ENCODE measurements at regions of chr12 and their contacts with region 1.

Region 1: DNA sequence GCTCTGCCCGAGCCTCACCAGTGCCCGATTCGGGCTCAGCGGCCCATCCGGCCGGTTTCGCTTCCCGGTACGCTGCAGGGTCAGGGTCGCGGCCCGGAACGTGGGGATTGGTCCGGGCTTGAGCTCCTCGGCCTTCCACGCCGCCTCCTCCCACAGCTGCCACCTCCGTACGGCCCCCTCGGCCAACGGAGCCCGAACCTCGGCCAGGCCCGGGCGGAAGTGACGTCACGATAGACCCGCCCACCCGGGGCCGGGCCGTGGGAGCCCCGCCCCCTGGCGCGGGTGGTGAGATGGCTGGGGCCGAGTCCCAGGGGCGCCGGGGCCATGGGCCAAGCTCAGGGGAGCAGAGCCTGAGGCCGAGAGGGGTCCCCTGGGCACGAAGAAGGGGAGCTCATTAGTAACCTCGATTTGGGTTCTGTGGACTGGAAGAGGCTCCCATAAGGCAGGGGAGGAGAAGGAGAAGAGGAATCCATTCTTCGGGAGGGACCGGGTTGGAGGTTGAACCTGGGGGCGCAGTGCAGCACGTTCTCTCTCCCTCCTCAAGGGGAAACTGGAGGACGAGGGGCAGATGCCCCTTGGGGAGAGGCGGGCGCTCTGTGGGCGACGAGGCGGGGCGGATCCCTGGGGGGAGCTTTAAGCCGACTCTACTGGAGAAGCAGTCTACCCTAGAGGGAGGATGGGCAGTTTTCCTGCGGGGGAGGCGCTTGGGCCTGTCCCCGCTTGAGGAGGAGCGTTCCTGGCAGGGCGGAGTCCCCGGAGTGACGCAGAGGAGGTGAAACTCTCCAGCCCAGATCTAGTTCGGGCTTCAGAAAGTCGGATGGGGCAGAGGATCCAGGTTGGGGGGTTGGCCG is at the start of gene MLF2:
- DNase-seq: peak; percentile 99
- H3K4me3 ChIP-seq: peak within 1 kb of the TSS; percentile 100
- H3K27ac ChIP-seq: peak within 1 kb of the TSS; percentile 99
- H3K4me1 ChIP-seq: peaks cover 18% of the 10 kb centered on the region
- H3K27me3 ChIP-seq: no peaks in the 10 kb centered on the region
- CTCF ChIP-seq: peak; percentile 98
- total RNA-seq, gene MLF2: 242 and 254 TPM in 2 replicates

Region 2: GRCh38 chr12:6764011-6764828 is 11.1 kb after region 1 on chr12:
- CTCF ChIA-PET with region 1: interaction called, 21 read pairs
- POLR2A ChIA-PET with region 1: interaction called, 6 read pairs
- intact Hi-C with region 1: loop called (anchors 2 kb)
- DNase-seq: peak; percentile 100
- H3K4me3 ChIP-seq: peak overlapping the region; percentile 97
- H3K27ac ChIP-seq: peak overlapping the region; percentile 89
- H3K4me1 ChIP-seq: peaks cover 36% of the 10 kb centered on the region
- H3K27me3 ChIP-seq: no peaks in the 10 kb centered on the region
- CTCF ChIP-seq: no peak

Region 3: DNA sequence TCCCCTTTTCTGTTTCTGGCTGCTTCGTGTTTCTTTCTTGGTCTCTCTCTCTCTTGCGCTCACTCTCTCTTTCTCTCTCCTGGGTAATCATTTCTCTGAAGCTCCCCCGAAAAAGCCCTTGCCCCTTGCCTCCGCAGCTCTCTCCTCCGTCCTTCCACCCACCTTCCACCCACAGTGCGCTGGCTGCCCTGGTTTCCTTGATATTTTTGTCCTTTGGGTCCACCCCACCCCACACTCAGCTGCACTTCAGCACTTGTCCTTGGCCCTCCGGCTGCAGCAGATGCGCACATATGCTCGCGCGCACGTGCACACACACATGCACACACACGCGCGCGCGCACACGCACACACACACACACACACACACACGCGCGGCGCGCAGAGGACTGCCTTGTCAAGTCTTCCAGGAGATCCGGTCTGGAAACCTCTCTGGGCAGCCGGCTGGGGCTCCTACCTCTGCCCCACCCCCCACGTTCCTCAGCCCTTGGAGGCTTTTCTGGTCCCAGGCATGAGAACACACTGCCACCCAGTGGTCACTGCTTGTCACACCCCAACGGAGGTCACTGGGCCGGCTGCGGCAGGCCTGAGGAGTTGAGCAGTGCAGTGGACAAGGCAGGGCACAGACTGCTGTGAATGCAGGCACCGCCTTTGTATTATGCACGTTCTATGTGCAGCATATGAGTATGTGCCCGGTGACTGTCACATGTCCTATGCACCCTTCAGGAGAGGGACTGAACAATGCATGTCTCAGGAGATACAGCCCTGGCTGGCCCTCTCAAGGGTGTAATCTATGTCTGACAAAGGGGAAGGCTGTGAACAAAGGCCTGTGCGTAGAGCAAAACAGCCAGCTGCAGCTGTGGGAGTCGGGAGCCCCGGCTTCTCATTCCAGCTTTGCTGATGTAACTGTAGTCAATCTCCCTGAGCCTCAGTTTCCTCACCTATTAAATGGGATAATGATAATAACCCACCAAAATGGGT is 25.7 kb after region 1 on chr12:
- CTCF ChIA-PET with region 1: interaction called, 12 read pairs
- POLR2A ChIA-PET with region 1: no interaction called
- intact Hi-C with region 1: loop called (anchors 1 kb)
- DNase-seq: peak; percentile 93
- H3K4me3 ChIP-seq: peak overlapping the region; percentile 30
- H3K27ac ChIP-seq: peak overlapping the region; percentile 29
- H3K4me1 ChIP-seq: peaks cover 8% of the 10 kb centered on the region
- H3K27me3 ChIP-seq: no peaks in the 10 kb centered on the region
- CTCF ChIP-seq: peak; percentile 96

Region 4: DNA sequence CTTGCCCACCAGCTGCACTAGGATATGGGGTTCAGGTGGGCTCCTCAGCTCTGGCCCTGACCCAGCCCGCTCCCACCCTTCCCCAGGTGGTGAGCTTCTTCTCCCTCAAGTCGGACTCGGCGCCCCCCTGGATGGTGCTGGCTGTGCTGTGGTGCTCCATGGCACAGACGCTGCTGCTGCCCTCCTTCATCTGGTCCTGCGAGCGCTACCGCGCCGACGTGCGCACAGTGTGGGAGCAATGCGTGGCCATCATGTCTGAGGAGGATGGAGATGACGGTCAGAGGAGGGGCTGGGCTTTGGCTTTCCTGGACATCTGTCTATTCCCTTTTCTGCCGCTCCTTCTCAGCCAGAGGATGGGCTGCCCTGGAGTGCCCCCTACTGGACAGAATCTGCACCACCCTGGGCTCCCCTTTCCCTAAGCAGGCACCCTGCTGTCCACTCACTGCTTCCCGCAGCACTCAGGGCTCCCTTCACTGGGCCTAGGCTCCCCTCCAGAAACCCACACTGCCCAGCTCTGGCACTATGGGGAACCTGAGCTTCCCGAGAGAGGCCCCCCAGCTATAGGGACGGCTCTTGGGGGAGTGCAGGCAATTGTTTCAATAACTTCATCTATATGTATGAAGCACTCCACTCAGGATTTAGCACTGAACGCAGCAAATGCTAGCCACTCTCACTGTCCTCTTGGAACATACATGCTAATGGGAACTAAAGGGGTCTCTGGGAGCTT is 72.4 kb after region 1 on chr12:
- CTCF ChIA-PET with region 1: interaction called, 6 read pairs
- POLR2A ChIA-PET with region 1: interaction called, 3 read pairs
- intact Hi-C with region 1: loop called (anchors 1 kb)
- DNase-seq: peak; percentile 85
- H3K4me3 ChIP-seq: no peak overlapping the region
- H3K27ac ChIP-seq: peak overlapping the region; percentile 11
- H3K4me1 ChIP-seq: peaks cover 37% of the 10 kb centered on the region
- H3K27me3 ChIP-seq: no peaks in the 10 kb centered on the region
- CTCF ChIP-seq: peak; percentile 92

Region 5: DNA sequence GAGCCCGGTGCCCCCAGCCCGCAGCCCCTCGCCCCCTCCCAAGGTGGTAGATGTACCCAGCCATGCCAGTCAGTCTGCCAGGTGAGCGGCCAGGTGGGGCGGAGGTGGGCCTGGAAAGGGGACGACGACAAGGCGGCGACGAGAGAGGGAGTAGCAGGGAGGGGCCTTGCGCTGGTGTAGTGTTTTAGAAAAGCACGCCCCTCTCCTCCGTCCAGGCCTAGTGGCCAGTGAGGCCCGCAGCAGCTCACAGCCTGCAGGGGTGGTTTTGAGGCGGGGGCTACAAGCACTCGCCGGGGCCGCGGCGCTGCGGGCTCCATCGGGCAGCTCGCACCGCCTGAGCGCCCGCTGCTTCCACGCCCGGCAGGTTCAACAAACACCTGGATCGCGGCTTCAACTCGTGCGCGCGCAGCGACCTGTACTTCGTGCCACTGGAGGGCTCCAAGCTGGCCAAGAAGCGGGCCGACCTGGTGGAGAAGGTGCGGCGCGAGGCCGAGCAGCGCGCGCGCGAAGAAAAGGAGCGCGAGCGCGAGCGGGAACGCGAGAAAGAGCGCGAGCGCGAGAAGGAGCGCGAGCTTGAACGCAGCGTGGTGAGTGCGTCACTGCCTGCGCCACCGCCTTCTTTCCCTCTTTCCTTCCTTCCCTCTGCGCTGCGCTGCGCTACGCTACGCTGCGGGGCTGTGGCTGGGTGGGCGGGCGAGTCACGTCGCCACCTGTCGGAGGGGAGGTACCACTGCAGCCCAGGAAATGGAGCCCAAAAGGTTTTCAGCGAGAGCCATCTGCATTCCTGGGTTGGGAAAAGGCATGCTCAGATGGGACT is 184.5 kb after region 1 on chr12:
- CTCF ChIA-PET with region 1: no interaction called
- POLR2A ChIA-PET with region 1: no interaction called
- intact Hi-C with region 1: loop called (anchors 5 kb)
- DNase-seq: peak; percentile 98
- H3K4me3 ChIP-seq: peak overlapping the region; percentile 62
- H3K27ac ChIP-seq: peak overlapping the region; percentile 98
- H3K4me1 ChIP-seq: peaks cover 16% of the 10 kb centered on the region
- H3K27me3 ChIP-seq: no peaks in the 10 kb centered on the region
- CTCF ChIP-seq: peak; percentile 99